Activated T-helper 1 cell treated with anti-CD3 and anti-CD28 coated beads, Interleukin-12 subunit alpha, Interleukin-12 subunit beta, Interleukin-2, Interleukin-4 antibody, amounts not matched to agents 30 ng/mL and 10 ng/mL and 1 ng/mL, durations not matched to agents 14 hours and 24 hours and 36 hours (primary cell): ENCODE measurements at regions of chr15 and their contacts with region 1.

Region 1: DNA sequence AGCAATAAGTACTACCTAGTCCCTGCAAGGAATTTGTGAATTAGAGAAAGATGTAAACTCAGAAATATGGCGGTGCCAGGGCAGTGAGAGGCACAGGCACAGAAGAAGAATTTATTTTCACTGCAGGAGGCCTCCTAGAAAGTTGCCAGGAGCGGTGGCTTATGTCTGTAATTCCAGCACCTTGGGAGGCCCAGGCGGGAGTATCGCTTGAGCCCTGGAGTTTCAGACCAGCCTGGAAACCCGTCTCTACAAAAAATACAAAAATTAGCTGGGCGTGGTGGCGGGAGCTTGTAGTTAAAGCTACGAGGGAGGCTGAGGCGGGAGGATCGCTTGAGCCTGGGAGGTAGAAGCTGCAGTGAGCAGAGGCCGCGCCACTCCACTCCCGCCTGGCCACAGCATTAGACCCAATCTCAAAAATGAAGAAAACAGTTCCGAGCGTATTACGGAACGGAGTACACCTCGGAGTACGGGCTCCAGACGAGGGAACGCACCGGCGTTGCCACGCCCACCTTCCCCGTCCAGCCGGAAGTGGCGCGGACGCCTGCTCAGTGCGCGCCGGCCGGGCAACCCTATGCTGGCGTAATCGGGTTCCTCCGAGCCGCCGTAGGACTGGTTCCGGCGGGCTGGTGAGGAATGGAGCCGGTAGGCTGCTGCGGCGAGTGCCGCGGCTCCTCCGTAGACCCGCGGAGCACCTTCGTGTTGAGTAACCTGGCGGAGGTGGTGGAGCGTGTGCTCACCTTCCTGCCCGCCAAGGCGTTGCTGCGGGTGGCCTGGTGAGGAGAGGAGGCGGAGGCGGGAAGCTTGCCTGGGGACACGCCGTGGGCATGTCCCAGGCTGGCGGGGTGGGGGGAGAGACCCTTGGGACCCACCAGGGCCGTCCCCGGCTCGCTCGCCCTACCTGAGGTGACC is at the start of gene FBXO22:
- DNase-seq: peak; percentile 89
- H3K4me3 Mint-ChIP-seq: peak within 1 kb of the TSS; percentile 99
- H3K27ac Mint-ChIP-seq: peak within 1 kb of the TSS; percentile 98
- H3K4me1 Mint-ChIP-seq: peaks cover 35% of the 10 kb centered on the region
- H3K27me3 Mint-ChIP-seq: no peaks in the 10 kb centered on the region
- total RNA-seq, gene FBXO22: 49.4 and 50.0 TPM in 2 replicates

Region 2: DNA sequence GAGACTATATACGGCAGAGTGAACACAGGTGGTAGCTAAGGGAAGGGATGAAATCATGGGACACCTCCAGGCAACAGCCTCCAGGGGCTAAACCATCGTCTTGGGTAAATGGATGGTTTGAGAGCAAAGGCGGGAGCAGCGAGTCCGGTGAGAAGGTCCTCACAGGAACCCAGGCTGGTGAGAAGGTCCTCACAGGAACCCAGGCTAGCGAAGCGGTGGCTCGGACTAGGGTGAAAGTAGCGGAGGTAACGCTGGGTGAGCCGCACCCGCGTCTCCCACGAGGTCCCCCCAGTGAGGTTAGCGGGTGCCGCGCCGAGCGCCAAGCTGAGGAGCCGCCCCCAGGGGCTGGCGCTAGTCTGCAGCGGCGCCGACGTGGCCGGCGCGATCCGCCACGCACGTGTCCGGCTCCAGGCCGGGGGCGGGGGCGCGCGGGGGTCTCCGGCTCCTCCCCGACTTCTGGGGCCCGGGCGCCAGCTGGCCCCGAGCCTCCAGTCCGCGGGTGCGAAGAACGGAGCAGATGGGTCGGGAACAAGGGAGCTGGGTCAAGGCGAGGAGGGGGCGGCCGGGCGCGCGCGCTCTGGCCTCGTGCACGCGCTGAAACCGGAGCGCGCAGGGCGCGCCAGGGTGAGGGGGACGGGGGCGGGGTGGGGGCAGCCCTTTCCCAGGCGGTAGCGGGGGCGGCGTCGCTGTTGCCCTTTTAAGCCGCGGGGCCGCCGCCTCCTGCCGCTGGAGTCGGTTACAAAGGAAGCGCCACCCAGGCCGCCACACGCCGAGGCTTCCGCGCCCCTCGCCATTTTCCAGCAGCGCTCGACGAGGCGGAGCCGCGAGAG is 60.6 kb before region 1 on chr15 and contains the start of gene UBE2Q2:
- intact Hi-C with region 1: loop called (anchors 1 kb)
- DNase-seq: peak; percentile 68
- H3K4me3 Mint-ChIP-seq: peak within 1 kb of the TSS; percentile 99
- H3K27ac Mint-ChIP-seq: peak within 1 kb of the TSS; percentile 93
- H3K4me1 Mint-ChIP-seq: peaks cover 50% of the 10 kb centered on the region
- H3K27me3 Mint-ChIP-seq: peaks cover 13% of the 10 kb centered on the region
- total RNA-seq, gene UBE2Q2: 20.5 and 20.9 TPM in 2 replicates

Region 3: DNA sequence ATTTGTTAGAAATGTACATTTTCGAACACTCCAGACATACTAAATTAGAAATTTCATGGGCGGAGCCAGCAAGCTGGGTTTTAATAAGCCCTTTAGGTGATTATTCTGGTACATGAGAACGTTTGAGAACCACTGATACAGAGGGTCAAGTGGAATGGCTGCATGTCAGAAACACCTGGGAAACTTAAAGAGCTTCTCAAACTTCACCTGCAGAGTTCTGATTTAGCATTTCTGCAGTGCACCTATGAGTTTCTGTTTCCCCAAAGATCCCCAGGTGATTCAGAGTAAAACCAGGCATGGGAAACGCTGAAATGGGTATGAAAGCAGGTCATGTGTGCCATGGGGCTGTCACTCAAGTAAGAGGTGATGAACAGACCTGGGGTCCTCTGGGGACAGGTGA is 224.3 kb after region 1 on chr15:
- intact Hi-C with region 1: no loop called
- DNase-seq: no peak
- H3K4me3 Mint-ChIP-seq: no peak overlapping the region
- H3K27ac Mint-ChIP-seq: no peak overlapping the region
- H3K4me1 Mint-ChIP-seq: no peaks in the 10 kb centered on the region
- H3K27me3 Mint-ChIP-seq: peaks cover 14% of the 10 kb centered on the region